AG04449 (cell line): ENCODE measurements at regions of chr10 and their contacts with region 1.

Region 1: DNA sequence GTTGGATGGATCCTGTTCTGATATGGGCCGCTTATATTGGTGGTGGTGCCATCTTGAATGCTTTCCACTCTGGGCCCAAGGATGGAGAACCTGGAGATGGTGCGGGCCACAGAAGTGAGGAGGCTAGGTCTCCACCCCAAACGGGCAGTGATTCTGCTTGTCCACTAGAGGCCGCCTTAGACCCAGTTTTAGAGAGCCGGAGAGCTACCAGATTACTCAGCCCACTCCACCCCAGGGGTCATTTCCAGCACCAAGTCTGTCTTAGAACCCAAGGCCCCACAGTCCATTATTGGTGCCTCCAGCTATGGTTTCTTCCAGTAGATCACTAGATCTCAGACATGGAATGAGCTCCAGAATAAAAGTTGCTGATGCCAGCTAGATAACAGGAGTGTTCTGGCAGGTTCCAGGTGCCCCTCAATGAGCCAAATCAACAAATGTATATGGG is 11.8 kb upstream of the CAMK2G start:
- DNase-seq: no peak
- H3K4me3 ChIP-seq: no peak overlapping the region
- CTCF ChIP-seq: peak; percentile 89

Region 2: GRCh38 chr10:73899423-73899822 is 13.3 kb after region 1 on chr10:
- CTCF ChIA-PET with region 1: interaction called, 109 read pairs
- POLR2A ChIA-PET with region 1: interaction called, 12 read pairs
- DNase-seq: no peak
- H3K4me3 ChIP-seq: no peak overlapping the region
- CTCF ChIP-seq: no peak

Region 3: GRCh38 chr10:73926152-73926764 is 40.2 kb after region 1 on chr10:
- CTCF ChIA-PET with region 1: interaction called, 806 read pairs
- POLR2A ChIA-PET with region 1: interaction called, 3 read pairs
- DNase-seq: no peak
- H3K4me3 ChIP-seq: no peak overlapping the region
- CTCF ChIP-seq: no peak

Region 4: DNA sequence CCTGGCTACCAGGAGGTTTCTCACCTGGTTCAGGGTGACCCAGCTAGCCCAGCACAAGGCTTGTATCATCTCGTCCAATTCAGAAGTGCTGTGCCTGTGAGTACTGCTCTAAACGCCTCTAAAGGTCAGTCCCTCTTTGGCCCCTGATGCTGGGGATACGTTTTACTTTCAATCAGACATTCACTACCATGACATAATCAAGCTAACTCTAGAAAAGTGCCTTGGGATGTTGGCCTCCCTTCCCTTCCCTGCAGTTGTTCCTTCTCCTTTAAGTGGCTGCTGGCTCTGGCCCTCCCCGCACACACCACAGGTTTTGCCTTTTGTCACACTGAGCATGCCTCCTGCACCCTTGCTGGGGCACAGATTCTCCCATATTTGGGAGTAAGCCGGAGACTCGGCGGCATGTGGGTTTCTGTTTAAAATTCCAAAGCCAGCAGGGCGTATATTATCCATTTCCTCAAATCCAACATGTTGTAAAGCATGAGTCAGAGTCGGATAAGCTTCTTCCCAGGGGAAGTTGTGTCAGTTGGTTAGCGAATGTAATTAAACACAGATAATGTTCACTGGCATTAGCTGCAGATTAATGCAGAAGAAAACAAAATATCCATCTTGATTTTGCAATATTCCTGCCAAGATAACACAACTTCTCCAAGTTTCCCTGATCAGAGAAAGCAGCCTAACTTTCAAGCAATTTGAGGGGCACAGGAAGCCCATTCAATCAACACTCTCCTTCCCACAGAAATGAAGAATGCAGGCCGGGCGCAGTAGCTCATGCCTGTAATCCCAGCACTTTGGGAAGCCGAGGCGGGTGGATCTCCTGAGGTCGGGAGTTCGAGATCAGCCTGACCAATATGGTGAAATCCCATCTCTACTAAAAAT is 80.0 kb after region 1 on chr10:
- CTCF ChIA-PET with region 1: interaction called, 36 read pairs
- POLR2A ChIA-PET with region 1: interaction called, 3 read pairs
- DNase-seq: peak; percentile 98
- H3K4me3 ChIP-seq: peak overlapping the region; percentile 12
- CTCF ChIP-seq: no peak

Region 5: GRCh38 chr10:74081192-74081803 is 195.2 kb after region 1 on chr10:
- CTCF ChIA-PET with region 1: interaction called, 87 read pairs
- POLR2A ChIA-PET with region 1: no interaction called
- DNase-seq: no peak
- H3K4me3 ChIP-seq: no peak overlapping the region
- CTCF ChIP-seq: peak; percentile 71

Region 6: DNA sequence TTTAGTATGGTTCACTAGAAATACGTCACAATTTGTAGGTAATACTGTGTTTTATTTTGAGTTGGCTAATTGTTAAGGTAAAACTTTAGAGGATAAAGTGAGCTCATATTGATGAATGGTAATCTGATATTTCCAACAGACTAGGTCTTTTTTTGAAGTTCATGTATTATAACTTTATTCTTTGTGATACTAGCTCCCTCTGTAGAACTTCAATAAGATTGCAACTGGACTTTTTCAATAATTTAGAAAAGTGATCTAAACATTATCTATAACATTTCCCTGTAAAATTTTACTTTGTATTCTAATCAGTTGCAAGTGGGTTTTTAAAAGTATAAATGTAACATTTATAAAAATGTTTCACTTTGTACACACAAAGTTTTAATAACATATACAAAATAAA is 348.5 kb after region 1 on chr10:
- CTCF ChIA-PET with region 1: interaction called, 22 read pairs
- POLR2A ChIA-PET with region 1: no interaction called
- DNase-seq: no peak
- H3K4me3 ChIP-seq: no peak overlapping the region
- CTCF ChIP-seq: no peak